ENCODE measurements at regions of chr16 and their contacts with region 1.

Region 1: DNA sequence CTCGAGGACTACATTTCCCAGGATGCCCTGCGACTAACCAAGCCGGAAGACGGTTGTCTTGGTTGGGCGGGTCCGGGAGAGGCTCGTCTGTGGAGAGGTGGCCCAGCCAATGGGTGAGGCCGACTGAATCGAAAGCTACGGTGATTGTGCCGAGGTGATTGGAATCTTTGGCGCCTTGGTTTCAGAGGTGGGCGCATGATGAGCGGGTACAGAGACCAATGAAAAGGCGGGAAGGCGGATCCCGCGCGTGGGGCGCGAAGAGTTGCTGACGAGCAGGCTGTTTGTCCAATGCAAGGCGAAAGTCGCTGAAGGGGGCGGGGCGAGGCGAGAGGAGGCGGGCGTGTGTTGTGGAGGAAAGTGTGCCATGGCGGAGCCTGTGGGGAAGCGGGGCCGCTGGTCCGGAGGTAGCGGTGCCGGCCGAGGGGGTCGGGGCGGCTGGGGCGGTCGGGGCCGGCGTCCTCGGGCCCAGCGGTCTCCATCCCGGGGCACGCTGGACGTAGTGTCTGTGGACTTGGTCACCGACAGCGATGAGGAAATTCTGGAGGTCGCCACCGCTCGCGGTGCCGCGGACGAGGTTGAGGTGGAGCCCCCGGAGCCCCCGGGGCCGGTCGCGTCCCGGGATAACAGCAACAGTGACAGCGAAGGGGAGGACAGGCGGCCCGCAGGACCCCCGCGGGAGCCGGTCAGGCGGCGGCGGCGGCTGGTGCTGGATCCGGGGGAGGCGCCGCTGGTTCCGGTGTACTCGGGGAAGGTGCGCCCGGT is at the start of gene NFATC2IP:
- DNase-seq: peak; percentile 98 to 100 (median 100)
- ATAC-seq: peak; percentile 92
- H3K4me3 ChIP-seq: peak within 1 kb of the TSS; percentile 67 to 75
- H3K4me3 Mint-ChIP-seq: peak within 1 kb of the TSS; percentile 89
- H3K27ac ChIP-seq: peak within 1 kb of the TSS; percentile 61 to 73
- H3K27ac Mint-ChIP-seq: peak within 1 kb of the TSS; percentile 85
- H3K4me1 ChIP-seq: peaks cover 17% of the 10 kb centered on the region
- H3K4me1 Mint-ChIP-seq: peaks cover 29% of the 10 kb centered on the region
- H3K27me3 ChIP-seq: no peaks in the 10 kb centered on the region
- H3K27me3 Mint-ChIP-seq: no peaks in the 10 kb centered on the region
- CTCF ChIP-seq: no peak
- total RNA-seq, gene NFATC2IP: 45.8 to 52.5 TPM

Region 2: GRCh38 chr16:28553776-28554633 is 396.8 kb before region 1 on chr16 and contains the start of gene SGF29:
- CTCF ChIA-PET with region 1: no interaction called
- POLR2A ChIA-PET with region 1: no interaction called
- intact Hi-C with region 1: loop called in 1 of 2 experiments (anchors 2 kb)
- DNase-seq: peak; percentile 86 to 97 (median 93)
- ATAC-seq: peak; percentile 93
- H3K4me3 ChIP-seq: peak within 1 kb of the TSS; percentile 87 to 99
- H3K4me3 Mint-ChIP-seq: peak within 1 kb of the TSS; percentile 92
- H3K27ac ChIP-seq: peak within 1 kb of the TSS; percentile 95 to 98
- H3K27ac Mint-ChIP-seq: peak within 1 kb of the TSS; percentile 98
- H3K4me1 ChIP-seq: peaks cover 18% of the 10 kb centered on the region
- H3K4me1 Mint-ChIP-seq: peaks cover 36% of the 10 kb centered on the region
- H3K27me3 ChIP-seq: no peaks in the 10 kb centered on the region
- H3K27me3 Mint-ChIP-seq: no peaks in the 10 kb centered on the region
- CTCF ChIP-seq: no peak
- total RNA-seq, gene SGF29: 41.1 to 44.5 TPM

Region 3: GRCh38 chr16:28863929-28864793 is 86.7 kb before region 1 on chr16:
- CTCF ChIA-PET with region 1: interaction called, 17 read pairs
- POLR2A ChIA-PET with region 1: interaction called, 11 read pairs
- intact Hi-C with region 1: loop called (anchors 1 kb)
- DNase-seq: peak in 4 of 9 experiments; percentile 20 to 70 (median 60)
- ATAC-seq: no peak
- H3K4me3 ChIP-seq: peak overlapping the region; percentile 97 to 100
- H3K4me3 Mint-ChIP-seq: peak overlapping the region; percentile 99
- H3K27ac ChIP-seq: peak overlapping the region; percentile 84 to 97
- H3K27ac Mint-ChIP-seq: peak overlapping the region; percentile 99
- H3K4me1 ChIP-seq: peaks cover 16% of the 10 kb centered on the region
- H3K4me1 Mint-ChIP-seq: peaks cover 33% of the 10 kb centered on the region
- H3K27me3 ChIP-seq: no peaks in the 10 kb centered on the region
- H3K27me3 Mint-ChIP-seq: no peaks in the 10 kb centered on the region
- CTCF ChIP-seq: no peak

Region 4: GRCh38 chr16:28924732-28925385 is 26.0 kb before region 1 on chr16 and contains the start of gene RABEP2:
- CTCF ChIA-PET with region 1: interaction called, 21 read pairs
- POLR2A ChIA-PET with region 1: interaction called, 18 read pairs
- intact Hi-C with region 1: loop called (anchors 1 kb)
- DNase-seq: peak; percentile 92 to 99 (median 94)
- ATAC-seq: peak; percentile 77
- H3K4me3 ChIP-seq: peak within 1 kb of the TSS; percentile 96 to 97
- H3K4me3 Mint-ChIP-seq: peak within 1 kb of the TSS; percentile 94
- H3K27ac ChIP-seq: peak within 1 kb of the TSS; percentile 98
- H3K27ac Mint-ChIP-seq: peak within 1 kb of the TSS; percentile 97
- H3K4me1 ChIP-seq: peaks cover 10% of the 10 kb centered on the region
- H3K4me1 Mint-ChIP-seq: peaks cover 25% of the 10 kb centered on the region
- H3K27me3 ChIP-seq: no peaks in the 10 kb centered on the region
- H3K27me3 Mint-ChIP-seq: no peaks in the 10 kb centered on the region
- CTCF ChIP-seq: no peak
- total RNA-seq, gene RABEP2: 26.5 to 29.0 TPM

Region 5: GRCh38 chr16:28974437-28975157 is 23.8 kb after region 1 on chr16 and contains the start of gene SPNS1:
- CTCF ChIA-PET with region 1: interaction called, 6 read pairs
- POLR2A ChIA-PET with region 1: interaction called, 3 read pairs
- intact Hi-C with region 1: loop called (anchors 1 kb)
- DNase-seq: peak; percentile 78 to 95 (median 90)
- ATAC-seq: peak; percentile 87
- H3K4me3 ChIP-seq: peak within 1 kb of the TSS; percentile 68 to 96
- H3K4me3 Mint-ChIP-seq: peak within 1 kb of the TSS; percentile 98
- H3K27ac ChIP-seq: peak within 1 kb of the TSS; percentile 55 to 79
- H3K27ac Mint-ChIP-seq: peak within 1 kb of the TSS; percentile 97
- H3K4me1 ChIP-seq: peaks cover 19% of the 10 kb centered on the region
- H3K4me1 Mint-ChIP-seq: peaks cover 41% of the 10 kb centered on the region
- H3K27me3 ChIP-seq: no peaks in the 10 kb centered on the region
- H3K27me3 Mint-ChIP-seq: no peaks in the 10 kb centered on the region
- CTCF ChIP-seq: no peak
- total RNA-seq, gene SPNS1: 31.7 to 31.8 TPM